Activated CD4-positive, alpha-beta T cell treated with anti-CD3 and anti-CD28 coated beads for 36 hours (primary cell): ENCODE measurements at regions of chr14 and their contacts with region 1.

Region 1: DNA sequence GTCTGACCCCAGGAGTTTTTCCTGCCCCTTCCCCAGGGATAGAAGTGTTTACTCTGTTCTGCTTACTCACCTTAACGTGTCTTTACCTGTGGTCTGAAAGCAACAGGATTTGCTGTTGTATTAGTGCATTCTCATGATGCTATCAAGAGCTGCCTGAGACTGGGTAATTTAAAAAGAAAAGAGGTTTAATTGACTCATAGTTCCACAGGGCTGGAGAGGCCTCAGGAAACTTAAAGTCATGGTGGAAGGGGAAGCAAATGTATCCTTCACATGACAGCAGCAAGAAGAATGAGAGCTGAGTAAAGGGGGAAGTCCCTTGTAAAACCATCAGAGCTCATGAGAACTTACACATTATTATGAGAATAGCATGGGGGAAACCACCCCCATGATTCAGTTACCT is 240.4 kb downstream of the SNAPC1 start:
- DNase-seq: peak; percentile 45
- ATAC-seq: peak; percentile 97
- H3K4me3 Mint-ChIP-seq: no peak overlapping the region
- H3K27ac Mint-ChIP-seq: peak overlapping the region; percentile 40
- H3K4me1 Mint-ChIP-seq: peaks cover 16% of the 10 kb centered on the region
- H3K27me3 Mint-ChIP-seq: peaks cover 14% of the 10 kb centered on the region

Region 2: GRCh38 chr14:60905923-60906322 is 1096.7 kb before region 1 on chr14:
- CTCF ChIA-PET with region 1: no interaction called
- POLR2A ChIA-PET with region 1: no interaction called
- intact Hi-C with region 1: no loop called
- DNase-seq: no peak
- ATAC-seq: no peak
- H3K4me3 Mint-ChIP-seq: no peak overlapping the region
- H3K27ac Mint-ChIP-seq: no peak overlapping the region
- H3K4me1 Mint-ChIP-seq: no peaks in the 10 kb centered on the region
- H3K27me3 Mint-ChIP-seq: no peaks in the 10 kb centered on the region

Region 3: GRCh38 chr14:61894452-61895077 is 108.1 kb before region 1 on chr14:
- CTCF ChIA-PET with region 1: interaction called, 3 read pairs
- POLR2A ChIA-PET with region 1: no interaction called
- intact Hi-C with region 1: loop called in 1 of 2 experiments (anchors 5 kb)
- DNase-seq: peak; percentile 83
- ATAC-seq: no peak
- H3K4me3 Mint-ChIP-seq: no peak overlapping the region
- H3K27ac Mint-ChIP-seq: no peak overlapping the region
- H3K4me1 Mint-ChIP-seq: peaks cover 14% of the 10 kb centered on the region
- H3K27me3 Mint-ChIP-seq: peaks cover 2% of the 10 kb centered on the region

Region 4: DNA sequence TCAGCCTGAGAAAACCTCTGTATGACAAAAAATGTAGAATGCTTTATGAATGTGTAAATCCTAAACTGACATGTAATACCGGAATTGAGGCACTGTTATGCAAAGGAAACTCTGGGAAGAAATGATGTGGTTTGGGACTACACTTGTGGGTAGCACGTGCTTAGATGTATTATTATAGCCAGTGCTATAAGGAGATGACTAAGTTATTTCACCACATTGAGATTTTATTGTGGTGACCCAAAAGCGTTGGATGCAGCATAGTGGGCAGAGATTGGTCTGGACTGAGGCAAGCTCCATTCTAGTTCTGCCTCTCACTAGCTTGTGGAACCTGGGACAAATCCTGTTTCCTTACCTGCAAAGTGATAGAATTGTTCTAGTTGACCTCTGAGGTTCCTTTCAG is 68.3 kb before region 1 on chr14:
- CTCF ChIA-PET with region 1: interaction called, 3 read pairs
- POLR2A ChIA-PET with region 1: no interaction called
- intact Hi-C with region 1: loop called in 1 of 2 experiments (anchors 2 kb)
- DNase-seq: peak; percentile 20
- ATAC-seq: peak; percentile 91
- H3K4me3 Mint-ChIP-seq: no peak overlapping the region
- H3K27ac Mint-ChIP-seq: no peak overlapping the region
- H3K4me1 Mint-ChIP-seq: peaks cover 7% of the 10 kb centered on the region
- H3K27me3 Mint-ChIP-seq: peaks cover 54% of the 10 kb centered on the region